K562 (cell line): ENCODE measurements at regions of chr17 and their contacts with region 1.

Region 1: GRCh38 chr17:4625181-4625617 is 16.3 kb downstream of the ALOX15 start:
- DNase-seq: no peak
- ATAC-seq: no peak
- H3K4me3 ChIP-seq: no peak overlapping the region
- H3K27ac ChIP-seq: no peak overlapping the region
- H3K4me1 ChIP-seq: peaks cover 3 to 4% of the 10 kb centered on the region in 2 experiments; a peak in 3 of 5 replicates
- H3K27me3 ChIP-seq: peaks cover 3 to 13% of the 10 kb centered on the region in 2 experiments; a peak in 3 of 5 replicates
- CTCF ChIP-seq: no peak
- EP300 ChIP-seq: no peak
- POLR2A ChIP-seq: no peak
- RAD21 ChIP-seq: no peak

Region 2: GRCh38 chr17:4554997-4555799 is 70.0 kb before region 1 on chr17 and contains the start of gene MYBBP1A:
- CTCF ChIA-PET with region 1: no interaction called
- POLR2A ChIA-PET with region 1: no interaction called
- in situ Hi-C with region 1: no loop called
- intact Hi-C with region 1: no loop called
- DNase-seq: peak; percentile 95 to 97 (median 95)
- ATAC-seq: peak; percentile 96
- H3K4me3 ChIP-seq: peak within 1 kb of the TSS; percentile 62
- H3K27ac ChIP-seq: peak within 1 kb of the TSS; percentile 83
- H3K4me1 ChIP-seq: peaks cover 3 to 36% of the 10 kb centered on the region in 2 experiments; a peak in 4 of 5 replicates
- H3K27me3 ChIP-seq: no peaks in the 10 kb centered on the region
- CTCF ChIP-seq: 0 out of 6 replicates have a peak, but pooled peaks of 1 of the 3 experiments have one; percentile 6
- EP300 ChIP-seq: no peak; the same call in 1 of the 2 replicates
- POLR2A ChIP-seq: peak; percentile 89
- RAD21 ChIP-seq: no peak
- polyA plus RNA-seq, gene MYBBP1A: 2.0 to 2.4 TPM

Region 3: DNA sequence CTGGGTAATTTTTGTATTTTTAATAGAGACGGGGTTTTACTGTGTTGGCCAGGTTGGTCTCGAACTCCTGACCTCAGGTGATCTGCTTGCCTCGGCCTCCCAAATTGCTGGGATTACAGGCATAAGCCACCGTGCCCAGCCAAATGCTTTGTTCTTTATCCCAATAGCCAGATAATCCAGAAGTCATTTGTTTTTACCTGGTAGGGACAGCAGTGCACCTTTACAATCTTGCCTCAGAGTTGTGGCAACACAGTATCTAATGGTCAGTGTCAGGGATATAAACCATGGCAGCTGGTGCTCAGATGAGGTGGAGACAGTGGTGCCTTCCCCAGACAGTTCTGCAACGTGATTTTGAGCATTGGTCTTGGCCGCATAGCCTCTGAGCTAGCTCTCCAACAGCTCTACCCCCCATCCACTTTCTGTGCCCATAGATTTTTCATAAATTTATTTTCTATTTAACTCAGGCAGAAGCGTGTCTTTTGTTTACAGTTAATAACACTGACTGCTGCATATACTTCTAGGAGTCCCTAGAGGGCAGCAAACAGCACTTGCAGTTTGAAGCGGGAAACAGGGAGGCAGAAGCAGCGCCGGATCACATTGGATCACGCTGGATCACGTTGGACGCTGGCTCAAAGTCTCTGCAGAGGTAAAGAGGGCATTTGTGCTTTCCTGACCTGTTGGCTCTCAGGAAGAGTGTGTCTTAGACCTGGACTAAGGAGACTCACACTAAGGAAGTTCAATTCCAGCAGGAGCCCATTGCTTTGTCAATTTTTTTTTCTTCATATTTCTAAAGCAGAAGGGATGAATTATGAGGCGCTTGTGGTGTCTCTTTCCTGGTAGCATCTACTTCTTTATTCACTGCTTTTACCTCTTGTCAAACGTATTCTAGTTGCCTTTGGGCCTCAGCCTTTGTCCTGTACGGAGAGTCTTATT is 59.7 kb before region 1 on chr17:
- CTCF ChIA-PET with region 1: interaction called, 27 read pairs
- POLR2A ChIA-PET with region 1: no interaction called
- in situ Hi-C with region 1: loop called (anchors 5 kb)
- intact Hi-C with region 1: loop called (anchors 2 kb)
- DNase-seq: peak; percentile 42 to 80 (median 52)
- ATAC-seq: peak; percentile 89
- H3K4me3 ChIP-seq: no peak overlapping the region
- H3K27ac ChIP-seq: no peak overlapping the region
- H3K4me1 ChIP-seq: peaks cover 0 to 2% of the 10 kb centered on the region in 2 experiments; a peak in 2 of 5 replicates
- H3K27me3 ChIP-seq: peaks cover 0 to 4% of the 10 kb centered on the region in 2 experiments; a peak in 2 of 5 replicates
- CTCF ChIP-seq: peak; percentile 79 to 81 (median 79)
- EP300 ChIP-seq: no peak
- POLR2A ChIP-seq: no peak
- RAD21 ChIP-seq: peak in 1 of 2 experiments; percentile 34; a peak in 2 of 4 replicates

Region 4: GRCh38 chr17:4696437-4696805 is 71.2 kb after region 1 on chr17:
- CTCF ChIA-PET with region 1: no interaction called
- POLR2A ChIA-PET with region 1: no interaction called
- in situ Hi-C with region 1: no loop called
- intact Hi-C with region 1: loop called (anchors 10 kb)
- DNase-seq: no peak
- ATAC-seq: no peak
- H3K4me3 ChIP-seq: no peak overlapping the region
- H3K27ac ChIP-seq: no peak overlapping the region
- H3K4me1 ChIP-seq: no peaks in the 10 kb centered on the region; a peak in 1 of 5 replicates
- H3K27me3 ChIP-seq: no peaks in the 10 kb centered on the region
- CTCF ChIP-seq: no peak
- EP300 ChIP-seq: no peak
- POLR2A ChIP-seq: no peak
- RAD21 ChIP-seq: no peak

Region 5: DNA sequence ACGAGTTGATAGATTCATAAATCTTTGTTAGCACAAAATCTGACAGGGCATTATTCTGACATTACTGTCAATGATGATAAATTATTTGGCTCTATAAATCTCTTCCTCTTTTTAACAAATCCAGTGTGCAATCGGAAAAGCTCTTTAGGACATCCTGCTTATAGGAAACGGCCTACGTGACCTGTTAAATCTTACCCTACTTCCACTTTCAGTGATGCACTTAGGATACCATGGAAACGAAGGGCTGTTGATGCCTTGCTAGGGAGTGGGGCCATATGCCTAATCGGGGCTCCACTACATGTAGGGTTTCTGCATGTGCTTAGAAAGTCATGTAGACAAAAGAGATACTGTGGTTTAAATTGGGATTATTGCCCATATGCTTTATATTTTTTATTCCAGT is 539.2 kb after region 1 on chr17:
- CTCF ChIA-PET with region 1: no interaction called
- POLR2A ChIA-PET with region 1: no interaction called
- in situ Hi-C with region 1: no loop called
- intact Hi-C with region 1: no loop called
- DNase-seq: no peak
- ATAC-seq: no peak
- H3K4me3 ChIP-seq: no peak overlapping the region
- H3K27ac ChIP-seq: no peak overlapping the region
- H3K4me1 ChIP-seq: no peaks in the 10 kb centered on the region; a peak in 1 of 5 replicates
- H3K27me3 ChIP-seq: no peaks in the 10 kb centered on the region
- CTCF ChIP-seq: no peak
- EP300 ChIP-seq: no peak
- POLR2A ChIP-seq: no peak
- RAD21 ChIP-seq: no peak